ENCODE measurements at regions of chr6 and their contacts with region 1.

Region 1: DNA sequence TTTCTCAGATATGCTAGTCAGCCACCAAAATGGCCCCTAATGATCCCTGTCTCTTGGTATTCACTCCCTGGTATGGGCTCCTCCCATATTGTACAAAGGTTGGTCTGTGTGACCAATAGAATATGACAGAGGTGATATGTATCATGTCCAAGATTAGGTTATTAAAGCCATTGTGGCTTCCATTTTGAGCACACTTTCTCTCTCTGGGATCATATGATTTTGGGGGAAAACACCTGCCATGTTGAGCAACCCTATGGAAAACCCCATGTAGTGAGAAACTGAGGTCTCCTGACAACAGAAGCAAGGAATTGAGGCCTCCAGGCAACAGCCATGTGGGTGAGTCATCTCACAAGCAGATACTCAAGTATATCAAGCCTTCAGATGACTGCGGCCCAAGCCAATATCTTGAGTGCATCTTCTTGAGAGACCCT is 7.1 kb upstream of the ZNF318 start:
- DNase-seq: no peak
- H3K4me3 ChIP-seq: no peak overlapping the region
- H3K27ac ChIP-seq: no peak overlapping the region
- H3K4me1 ChIP-seq: peaks cover 9% of the 10 kb centered on the region
- H3K27me3 ChIP-seq: no peaks in the 10 kb centered on the region
- CTCF ChIP-seq: no peak

Region 2: DNA sequence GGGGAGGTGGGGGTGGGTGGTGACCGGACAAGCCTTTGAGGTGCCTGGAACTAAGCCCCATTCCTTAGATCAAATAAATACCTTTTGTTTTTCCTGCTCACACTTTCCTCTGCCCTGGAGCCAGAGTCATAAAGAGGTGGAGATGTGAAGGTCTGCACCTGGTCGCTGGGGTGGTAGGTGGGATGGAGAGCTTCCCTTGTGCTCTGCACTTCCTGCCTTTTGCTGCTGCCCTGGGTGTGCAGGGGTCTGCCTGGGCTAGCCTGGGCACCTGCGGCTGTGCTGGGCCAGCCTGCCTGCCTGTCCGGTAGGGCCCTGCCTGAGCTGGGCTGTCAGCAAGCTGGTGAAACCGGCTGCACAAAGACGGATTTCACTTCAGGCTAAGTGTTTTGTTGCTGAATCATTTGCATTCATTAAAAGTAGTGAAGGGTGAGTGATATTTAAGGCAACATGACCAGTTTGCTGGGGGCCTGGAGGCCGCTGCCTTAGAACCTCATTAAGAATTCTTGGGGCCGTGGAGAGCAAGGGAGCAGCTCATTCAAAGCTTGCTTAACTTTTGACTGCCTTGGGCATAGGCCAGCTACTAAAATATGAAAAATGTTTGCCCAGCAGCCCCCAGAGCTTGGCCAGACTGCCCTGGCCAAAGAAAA is 280.0 kb before region 1 on chr6:
- CTCF ChIA-PET with region 1: interaction called, 12 read pairs
- POLR2A ChIA-PET with region 1: no interaction called
- intact Hi-C with region 1: no loop called
- DNase-seq: peak; percentile 89 to 98
- H3K4me3 ChIP-seq: peak overlapping the region; percentile 47; the same call in 1 of the 2 replicates
- H3K27ac ChIP-seq: peak overlapping the region; percentile 89
- H3K4me1 ChIP-seq: peaks cover 60% of the 10 kb centered on the region
- H3K27me3 ChIP-seq: no peaks in the 10 kb centered on the region
- CTCF ChIP-seq: no peak; the same call in 1 of the 2 replicates

Region 3: DNA sequence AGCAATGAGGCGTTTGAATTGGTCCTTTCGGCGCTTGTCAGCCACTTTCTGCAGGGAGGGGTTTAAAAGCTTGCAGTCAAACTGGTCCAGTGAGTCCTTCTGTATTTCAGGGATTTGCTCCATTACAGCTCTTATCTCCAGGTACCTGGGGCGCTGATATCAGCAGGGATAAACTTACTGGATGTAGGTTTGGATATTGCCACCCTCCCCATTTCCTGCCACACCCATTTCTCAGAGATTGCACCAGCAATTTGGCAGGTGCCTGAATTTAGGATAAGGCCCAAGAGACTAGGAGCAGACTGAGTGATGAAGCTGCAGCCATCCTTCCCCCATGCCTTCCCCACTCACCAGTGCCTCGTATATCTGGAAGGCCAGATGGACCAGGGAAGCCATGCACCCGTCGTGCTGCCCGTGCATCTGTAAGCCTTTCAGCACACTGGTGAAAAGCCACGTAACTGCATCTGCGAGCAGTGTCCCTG is 148.0 kb after region 1 on chr6:
- CTCF ChIA-PET with region 1: no interaction called
- POLR2A ChIA-PET with region 1: interaction called, 17 read pairs
- intact Hi-C with region 1: no loop called
- DNase-seq: peak in 1 of 2 experiments; percentile 17
- H3K4me3 ChIP-seq: no peak overlapping the region
- H3K27ac ChIP-seq: no peak overlapping the region
- H3K4me1 ChIP-seq: peaks cover 8% of the 10 kb centered on the region
- H3K27me3 ChIP-seq: no peaks in the 10 kb centered on the region
- CTCF ChIP-seq: no peak